ENCODE measurements at regions of chr18 and their contacts with region 1.

Region 1: GRCh38 chr18:46173393-46174341 is 69.5 kb downstream of the HAUS1 start:
- DNase-seq: peak; percentile 91
- H3K4me3 ChIP-seq: peak overlapping the region; percentile 63 to 99 (median 67)
- H3K27ac ChIP-seq: peak overlapping the region; percentile 79
- H3K4me1 ChIP-seq: peaks cover 16% of the 10 kb centered on the region
- H3K27me3 ChIP-seq: no peaks in the 10 kb centered on the region
- CTCF ChIP-seq: peak; percentile 74 to 95

Region 2: DNA sequence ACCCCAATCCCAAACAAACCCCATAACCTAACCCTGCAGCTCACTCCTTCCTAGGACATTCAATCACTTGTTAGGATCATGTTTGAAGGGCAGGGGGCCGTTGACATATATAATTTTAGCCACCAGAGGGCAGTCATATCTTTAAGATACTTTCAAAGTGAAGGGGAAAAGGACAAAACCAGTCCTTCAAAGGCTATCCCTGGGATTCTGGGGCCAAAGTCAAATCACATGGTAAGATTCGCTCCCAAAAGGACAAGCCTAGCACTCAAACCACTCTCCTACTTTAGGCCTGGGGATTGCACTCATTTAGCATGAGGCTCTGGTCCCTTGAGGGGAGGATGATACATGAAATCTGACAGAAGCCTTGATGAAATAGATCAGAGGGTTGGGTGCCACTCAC is 24.9 kb before region 1 on chr18:
- CTCF ChIA-PET with region 1: interaction called, 7 read pairs
- dilution Hi-C with region 1: no loop called
- in situ Hi-C with region 1: no loop called
- intact Hi-C with region 1: loop called (anchors 1 kb)
- DNase-seq: peak; percentile 42
- H3K4me3 ChIP-seq: no peak overlapping the region
- H3K27ac ChIP-seq: no peak overlapping the region
- H3K4me1 ChIP-seq: peaks cover 23% of the 10 kb centered on the region
- H3K27me3 ChIP-seq: no peaks in the 10 kb centered on the region
- CTCF ChIP-seq: peak; percentile 63 to 73

Region 3: GRCh38 chr18:46213295-46213694 is 39.6 kb after region 1 on chr18:
- CTCF ChIA-PET with region 1: interaction called, 3 read pairs
- dilution Hi-C with region 1: no loop called
- in situ Hi-C with region 1: no loop called
- intact Hi-C with region 1: loop called (anchors 2 kb)
- DNase-seq: no peak
- H3K4me3 ChIP-seq: no peak overlapping the region
- H3K27ac ChIP-seq: no peak overlapping the region
- H3K4me1 ChIP-seq: peaks cover 9% of the 10 kb centered on the region
- H3K27me3 ChIP-seq: no peaks in the 10 kb centered on the region
- CTCF ChIP-seq: peak; percentile 49 to 59

Region 4: GRCh38 chr18:46281185-46282176 is 107.8 kb after region 1 on chr18:
- CTCF ChIA-PET with region 1: interaction called, 8 read pairs
- dilution Hi-C with region 1: no loop called
- in situ Hi-C with region 1: no loop called
- intact Hi-C with region 1: loop called (anchors 2 kb)
- DNase-seq: peak; percentile 65
- H3K4me3 ChIP-seq: no peak overlapping the region
- H3K27ac ChIP-seq: no peak overlapping the region
- H3K4me1 ChIP-seq: peaks cover 11% of the 10 kb centered on the region
- H3K27me3 ChIP-seq: no peaks in the 10 kb centered on the region
- CTCF ChIP-seq: peak; percentile 96 to 97

Region 5: DNA sequence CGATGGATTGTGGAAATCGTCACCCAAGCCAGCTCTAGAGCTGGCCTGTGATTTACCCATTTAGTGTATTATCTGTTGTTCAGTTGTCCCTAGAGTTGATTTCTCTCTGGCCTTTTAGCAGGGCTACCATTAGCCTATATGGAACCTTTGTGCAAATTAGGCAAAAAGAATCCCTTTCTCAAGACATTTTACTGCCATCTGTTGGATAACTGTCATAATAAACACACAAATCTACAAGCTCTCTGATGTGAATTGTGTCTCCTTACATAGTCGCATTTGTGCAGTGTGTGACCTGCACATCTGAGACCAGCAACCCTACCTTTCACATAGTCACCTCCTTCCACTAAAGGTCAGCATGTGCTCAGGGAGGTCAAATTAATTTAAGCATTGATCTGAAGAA is 449.3 kb after region 1 on chr18:
- CTCF ChIA-PET with region 1: interaction called, 5 read pairs
- dilution Hi-C with region 1: no loop called
- in situ Hi-C with region 1: no loop called
- intact Hi-C with region 1: loop called (anchors 1 kb)
- DNase-seq: peak; percentile 16
- H3K4me3 ChIP-seq: no peak overlapping the region
- H3K27ac ChIP-seq: no peak overlapping the region
- H3K4me1 ChIP-seq: peaks cover 14% of the 10 kb centered on the region
- H3K27me3 ChIP-seq: no peaks in the 10 kb centered on the region
- CTCF ChIP-seq: peak in 1 of 2 donors; percentile 21

Measured in mammary epithelial cell (primary cell).